Heart right ventricle (tissue), 16 donors: ENCODE measurements at regions of chr16 and their contacts with region 1.

Region 1: DNA sequence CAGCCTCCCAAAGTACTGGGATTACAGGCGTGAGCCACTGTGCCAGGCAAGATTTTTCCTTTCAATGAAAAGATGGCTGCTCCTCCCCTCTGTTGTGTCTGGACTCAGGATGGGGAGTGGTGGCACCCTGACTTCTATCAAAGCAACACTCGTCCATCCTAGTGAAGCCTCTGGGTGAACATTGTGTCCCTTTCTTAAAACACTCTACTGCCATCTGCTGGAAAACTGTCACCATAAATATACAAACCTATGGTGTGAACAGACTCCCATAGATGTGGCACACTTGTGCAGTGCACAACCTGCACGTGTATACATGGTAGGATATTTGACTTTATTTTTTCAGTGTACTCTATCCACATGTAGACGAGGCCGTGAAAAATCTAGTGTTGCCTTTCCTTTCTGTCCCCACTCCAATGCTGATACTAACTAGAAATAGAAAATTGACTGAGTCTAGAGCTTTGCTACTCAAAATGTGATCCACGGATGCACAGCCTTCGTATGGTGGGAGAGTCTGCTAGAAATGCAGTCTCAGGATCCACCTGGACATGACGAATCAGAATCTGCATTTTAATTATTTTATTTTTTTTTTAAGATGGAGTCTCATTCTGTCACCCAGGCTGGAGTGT is 55.9 kb upstream of the PLCG2 start:
- DNase-seq: peak in 1 of 2 donors; percentile 75
- ATAC-seq: peak; percentile 88 to 95 (median 94)
- H3K4me3 ChIP-seq: no peak overlapping the region
- H3K27ac ChIP-seq: no peak overlapping the region
- H3K4me1 ChIP-seq: peaks cover 0 to 9% (median 0%) of the 10 kb centered on the region in 9 donors
- H3K27me3 ChIP-seq: peaks cover 0 to 6% (median 0%) of the 10 kb centered on the region in 7 donors
- CTCF ChIP-seq: peak; percentile 61 to 84 (median 76)

Region 2: GRCh38 chr16:81360135-81360534 is 363.1 kb before region 1 on chr16:
- intact Hi-C with region 1: loop called in 5 of 10 experiments (anchors 5 to 10 kb)
- DNase-seq: no peak
- ATAC-seq: no peak
- H3K4me3 ChIP-seq: no peak overlapping the region
- H3K27ac ChIP-seq: no peak overlapping the region
- H3K4me1 ChIP-seq: no peaks in the 10 kb centered on the region
- H3K27me3 ChIP-seq: no peaks in the 10 kb centered on the region
- CTCF ChIP-seq: no peak

Region 3: DNA sequence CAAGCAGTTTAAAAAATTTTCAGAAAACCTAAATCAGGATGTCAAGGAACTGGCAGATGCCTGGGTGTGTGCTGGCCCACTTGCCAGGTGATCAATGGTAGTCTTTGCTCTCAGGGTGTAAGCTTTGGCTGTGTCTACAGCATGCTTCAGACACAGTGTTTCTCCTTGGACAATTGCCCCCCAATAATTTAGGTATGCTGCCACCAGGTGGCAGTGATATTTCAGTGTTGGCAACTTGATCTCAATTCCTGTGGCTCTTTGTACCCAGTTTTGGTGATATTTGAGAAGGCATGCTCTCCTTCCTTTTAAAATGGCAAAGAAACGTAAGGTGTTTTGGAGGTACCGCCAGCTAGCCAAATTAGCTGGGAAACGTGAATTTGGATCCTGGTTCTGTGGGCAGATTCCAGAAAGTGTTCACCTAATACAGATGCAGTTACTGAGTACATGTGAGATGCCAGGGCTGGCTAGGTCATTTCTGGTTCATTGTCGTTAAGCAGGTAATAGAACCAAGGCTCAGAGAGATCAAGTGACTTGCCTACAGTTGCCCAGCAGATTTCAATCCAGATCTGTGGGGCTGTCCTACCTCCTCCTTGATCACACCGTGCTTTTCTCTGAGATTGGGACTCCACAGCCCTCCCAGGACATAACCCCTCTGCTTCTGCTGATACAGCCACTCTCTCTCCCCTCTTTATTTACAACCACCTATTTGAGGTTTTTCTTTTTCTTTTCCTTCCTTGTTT is 99.7 kb before region 1 on chr16:
- intact Hi-C with region 1: loop called (anchors 2 to 10 kb)
- DNase-seq: no peak
- ATAC-seq: peak in 1 of 8 donors; percentile 19
- H3K4me3 ChIP-seq: no peak overlapping the region
- H3K27ac ChIP-seq: peak overlapping the region in 1 of 10 donors; percentile 12
- H3K4me1 ChIP-seq: peaks cover 0 to 25% (median 13%) of the 10 kb centered on the region in 9 donors
- H3K27me3 ChIP-seq: no peaks in the 10 kb centered on the region
- CTCF ChIP-seq: peak in 8 of 9 donors; percentile 34 to 73 (median 61)

Region 4: DNA sequence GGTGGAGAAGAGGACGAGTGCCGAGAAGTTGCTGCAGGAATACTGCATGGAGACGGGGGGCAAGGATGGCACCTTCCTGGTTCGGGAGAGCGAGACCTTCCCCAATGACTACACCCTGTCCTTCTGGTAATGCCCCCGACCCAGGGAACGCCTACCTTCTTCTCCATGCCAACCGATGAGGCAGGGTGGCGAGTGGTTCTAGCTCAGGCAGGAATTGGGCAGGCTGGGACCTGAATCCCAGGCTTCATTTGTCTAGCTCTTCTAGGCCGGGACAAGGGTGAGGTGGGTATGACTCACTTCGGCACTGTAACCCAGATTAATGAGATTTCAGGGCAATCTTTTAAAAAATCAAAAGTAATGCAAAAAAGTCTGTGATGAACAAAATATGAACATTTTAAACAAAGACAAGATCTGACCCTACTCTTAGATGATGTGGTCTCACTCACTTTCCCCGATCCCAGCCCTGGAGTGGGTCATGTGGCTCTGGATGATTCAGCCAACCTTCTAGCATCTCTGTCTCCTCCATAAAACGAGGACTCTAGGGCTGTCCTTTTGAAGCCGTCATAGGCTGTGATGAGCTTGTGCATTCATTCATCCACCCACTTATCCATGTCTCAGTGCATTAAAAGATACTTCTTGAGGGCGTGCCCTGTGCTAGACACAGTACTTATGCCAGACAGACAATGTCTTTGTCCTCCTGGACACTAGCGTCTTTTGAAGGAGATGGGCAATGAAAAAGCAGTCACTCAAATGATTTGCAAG is 185.4 kb after region 1 on chr16:
- intact Hi-C with region 1: no loop called
- DNase-seq: no peak
- ATAC-seq: no peak
- H3K4me3 ChIP-seq: no peak overlapping the region
- H3K27ac ChIP-seq: no peak overlapping the region
- H3K4me1 ChIP-seq: no peaks in the 10 kb centered on the region
- H3K27me3 ChIP-seq: no peaks in the 10 kb centered on the region
- CTCF ChIP-seq: no peak